ENCODE measurements at regions of chr17 and their contacts with region 1.

Region 1: DNA sequence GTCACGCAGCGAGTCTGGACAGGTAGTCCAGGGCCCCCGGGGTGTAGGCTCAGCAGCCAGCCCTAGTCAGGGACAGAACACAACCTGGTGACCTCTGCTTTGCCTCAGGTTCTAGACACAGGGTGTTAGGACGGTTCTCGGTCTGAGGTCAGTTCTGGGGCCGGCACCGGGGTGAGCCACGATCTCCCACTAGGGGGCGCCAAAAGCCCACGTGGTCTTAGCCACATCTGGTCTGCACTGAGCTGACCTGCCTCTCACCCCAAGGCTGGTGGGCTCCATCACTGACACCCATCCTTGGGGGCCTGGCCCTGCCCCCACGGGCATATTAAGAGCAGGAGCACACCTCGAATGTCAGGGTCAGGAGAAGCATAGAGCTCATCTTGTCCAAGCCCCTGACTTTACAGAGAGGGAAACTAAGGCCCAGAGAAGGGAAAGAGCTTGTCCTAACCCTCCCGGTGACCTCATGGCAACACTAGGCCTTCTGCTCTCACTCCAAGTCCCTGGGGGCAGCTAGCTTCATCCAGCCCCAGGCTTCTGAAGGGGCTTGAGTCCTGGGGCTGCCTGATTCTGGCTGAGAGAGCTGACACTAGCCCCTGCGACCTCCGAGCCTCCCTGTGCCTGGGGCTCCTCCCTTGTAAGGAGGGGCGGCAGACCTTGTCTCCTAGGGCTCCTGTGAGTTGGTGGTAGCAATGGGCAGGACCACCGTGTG is 9.0 kb downstream of the SLC5A10 start:
- DNase-seq: peak; percentile 91
- CTCF ChIP-seq: peak; percentile 88

Region 2: DNA sequence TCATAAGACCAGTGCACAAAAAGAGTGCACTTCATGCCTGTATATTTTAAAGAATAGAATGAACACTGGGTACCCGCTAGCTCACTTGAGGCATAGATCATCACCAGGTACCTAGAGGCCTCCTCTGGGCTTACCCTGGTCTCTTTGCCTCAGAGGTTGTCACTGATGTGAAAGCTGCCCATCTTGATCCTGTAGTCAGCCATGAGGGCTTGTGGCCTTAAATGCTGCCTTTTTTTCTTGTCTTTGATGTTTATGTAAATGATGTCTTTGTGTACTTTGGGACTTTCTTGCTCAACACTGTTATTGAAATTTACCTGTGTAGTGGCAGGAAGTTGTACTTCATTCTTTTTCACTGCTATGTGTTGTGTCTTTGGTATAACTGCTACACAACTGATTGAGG is 35.8 kb before region 1 on chr17:
- CTCF ChIA-PET with region 1: interaction called, 11 read pairs
- POLR2A ChIA-PET with region 1: no interaction called
- DNase-seq: no peak
- CTCF ChIP-seq: no peak

Region 3: GRCh38 chr17:18944646-18945045 is 16.3 kb before region 1 on chr17:
- CTCF ChIA-PET with region 1: interaction called, 26 read pairs
- POLR2A ChIA-PET with region 1: interaction called, 3 read pairs
- DNase-seq: no peak
- CTCF ChIP-seq: no peak

Region 4: GRCh38 chr17:18997650-18998196 is 36.8 kb after region 1 on chr17:
- CTCF ChIA-PET with region 1: interaction called, 28 read pairs
- POLR2A ChIA-PET with region 1: interaction called, 3 read pairs
- DNase-seq: no peak
- CTCF ChIP-seq: no peak

Region 5: DNA sequence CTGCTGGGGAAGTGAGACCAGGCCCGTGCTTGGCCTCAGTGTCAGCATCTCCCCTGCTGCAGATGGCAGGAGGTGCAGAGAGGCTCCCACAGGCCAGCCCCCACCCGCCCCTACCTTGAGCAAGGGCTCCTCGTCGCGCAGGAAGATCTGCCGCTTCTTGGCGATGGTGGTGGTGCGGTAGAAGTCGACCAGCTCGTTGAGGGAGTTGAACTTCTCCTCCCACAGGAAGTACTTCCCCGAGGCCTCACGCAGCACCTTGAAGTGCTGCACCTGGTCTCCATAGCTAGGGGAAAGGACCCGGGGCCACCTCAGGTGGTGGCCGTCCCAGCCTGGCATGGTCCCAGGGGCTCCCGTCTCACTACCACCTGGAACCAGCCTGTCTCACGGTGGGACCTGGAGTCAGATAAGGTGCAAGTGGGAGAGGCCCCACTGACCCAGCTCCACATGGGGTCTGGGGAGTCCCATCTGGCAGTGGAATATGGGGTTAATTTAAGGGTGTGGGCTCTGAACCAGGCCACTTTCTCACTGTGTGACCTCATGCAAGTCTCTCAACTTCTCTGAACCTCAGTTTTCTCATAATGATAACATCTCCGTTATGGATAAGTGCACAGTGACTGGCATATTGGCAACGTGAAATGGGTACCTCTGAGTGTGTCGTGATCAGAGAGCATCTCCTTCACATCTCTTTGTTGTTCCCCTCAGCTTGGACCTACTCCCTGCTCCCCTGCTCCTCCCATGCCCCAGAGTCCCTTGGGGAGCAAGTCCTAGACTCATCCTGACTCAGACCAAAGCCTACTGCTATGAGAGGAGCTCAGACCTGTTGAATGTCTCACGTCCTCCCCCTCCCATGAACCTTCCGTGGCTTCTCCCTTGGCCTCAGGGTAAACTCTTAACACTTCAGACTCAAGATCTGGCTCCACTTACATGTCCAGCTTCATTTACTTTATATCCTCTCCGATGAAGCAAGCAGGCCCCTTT is 63.4 kb after region 1 on chr17:
- CTCF ChIA-PET with region 1: interaction called, 14 read pairs
- POLR2A ChIA-PET with region 1: no interaction called
- DNase-seq: no peak
- CTCF ChIP-seq: no peak

Region 6: DNA sequence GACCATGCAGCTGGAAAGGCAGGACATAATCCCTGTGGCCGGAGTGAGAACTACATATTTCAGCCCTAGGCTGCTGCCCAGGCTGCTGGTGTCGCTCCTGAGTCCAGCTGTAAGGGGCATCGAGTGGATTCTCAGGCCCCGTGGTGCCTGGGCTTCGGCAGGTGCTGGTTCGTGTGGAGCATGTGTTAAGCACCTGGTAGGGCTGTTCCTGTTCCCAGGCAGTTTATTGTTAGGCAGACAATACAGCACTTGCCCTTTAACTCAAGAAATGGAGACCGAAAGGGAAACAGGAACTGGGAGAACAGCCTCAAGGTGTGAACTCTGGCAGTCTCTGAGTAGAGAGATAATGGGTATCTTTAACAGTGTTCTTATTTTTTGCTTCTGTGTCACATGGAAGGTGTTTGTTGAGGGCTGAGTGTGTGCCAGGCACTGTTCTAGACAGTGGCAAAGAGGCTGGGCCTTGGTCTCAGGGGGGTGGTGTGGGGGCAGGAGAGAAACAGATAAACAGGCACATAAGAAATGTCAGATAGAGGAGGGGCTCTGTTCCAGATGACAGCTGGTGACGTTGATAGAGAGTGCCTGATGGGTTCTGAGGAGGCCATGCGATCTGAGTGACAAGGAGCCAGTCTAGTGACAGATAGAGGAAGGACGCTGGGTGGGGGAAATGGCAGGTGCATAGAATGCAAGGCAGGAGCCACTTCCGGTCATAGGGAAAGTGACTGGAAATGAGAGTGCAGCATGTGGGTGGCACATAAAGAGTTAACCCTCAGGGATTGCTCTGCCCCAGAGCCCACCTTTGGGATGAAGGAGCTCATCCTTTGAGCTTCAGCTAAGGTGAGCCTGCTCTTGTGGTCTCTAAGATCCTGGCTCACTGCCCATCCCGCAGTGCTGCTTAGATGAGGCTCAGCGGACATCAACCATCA is 310.0 kb after region 1 on chr17:
- CTCF ChIA-PET with region 1: no interaction called
- POLR2A ChIA-PET with region 1: no interaction called
- DNase-seq: peak; percentile 68
- CTCF ChIP-seq: no peak

Measured in GM10248 (cell line).